Mammary epithelial cell (primary cell): ENCODE measurements at regions of chr10 and their contacts with region 1.

Region 1: DNA sequence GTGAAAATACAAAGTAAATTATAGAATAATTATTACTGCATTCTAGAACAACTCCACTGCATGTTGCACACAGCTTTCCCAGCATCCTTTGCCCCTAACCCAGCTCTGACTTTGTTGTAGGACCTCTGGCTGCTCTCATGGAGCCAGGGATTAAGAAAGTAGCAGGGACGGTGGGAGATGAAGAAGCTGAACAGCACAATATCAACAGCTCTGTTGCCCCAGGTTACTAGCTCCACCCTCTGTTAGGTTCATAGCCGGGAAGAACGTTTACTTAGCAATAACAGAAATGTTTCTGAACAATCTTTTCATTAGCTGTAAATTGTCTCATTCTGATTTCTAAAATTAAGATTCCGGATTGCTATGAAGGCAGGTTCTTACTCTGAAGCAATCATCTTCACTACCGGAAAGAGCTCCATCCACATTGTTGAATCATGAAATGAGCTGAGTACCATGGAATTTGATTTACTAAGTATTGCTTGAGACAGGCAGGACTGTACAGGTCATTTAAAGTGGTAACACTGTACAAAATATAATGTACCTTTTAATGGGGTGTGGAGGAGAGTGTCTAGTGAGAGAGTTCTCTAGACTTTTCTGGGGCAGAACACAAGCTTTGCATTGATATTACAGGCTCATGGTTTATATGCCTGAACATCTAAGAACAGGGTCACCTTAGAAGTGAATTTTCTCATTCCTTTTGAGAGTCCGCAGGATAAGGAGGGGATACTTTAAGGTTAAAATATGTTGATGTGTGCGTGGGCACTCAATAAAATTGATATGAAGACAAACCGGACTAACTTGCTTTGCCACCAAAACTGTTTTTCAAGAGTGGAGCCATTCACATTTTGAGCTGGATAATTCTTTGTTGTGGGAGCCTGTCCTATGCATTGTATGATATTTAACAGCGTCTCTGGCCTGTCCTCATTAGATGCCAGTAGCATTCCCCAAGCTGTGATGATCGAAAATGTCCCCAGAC is 20.8 kb upstream of the RAB18 start:
- DNase-seq: peak; percentile 91
- H3K4me3 ChIP-seq: peak overlapping the region; percentile 16 to 36 (median 36)
- H3K27ac ChIP-seq: peak overlapping the region; percentile 98
- H3K4me1 ChIP-seq: peaks cover 43% of the 10 kb centered on the region
- H3K27me3 ChIP-seq: no peaks in the 10 kb centered on the region
- CTCF ChIP-seq: no peak

Region 2: GRCh38 chr10:27147701-27148100 is 335.6 kb before region 1 on chr10:
- CTCF ChIA-PET with region 1: no interaction called
- dilution Hi-C with region 1: no loop called
- in situ Hi-C with region 1: no loop called
- intact Hi-C with region 1: no loop called
- DNase-seq: no peak
- H3K4me3 ChIP-seq: no peak overlapping the region
- H3K27ac ChIP-seq: no peak overlapping the region
- H3K4me1 ChIP-seq: peaks cover 5% of the 10 kb centered on the region
- H3K27me3 ChIP-seq: no peaks in the 10 kb centered on the region
- CTCF ChIP-seq: no peak

Region 3: GRCh38 chr10:27390681-27391080 is 92.6 kb before region 1 on chr10:
- CTCF ChIA-PET with region 1: no interaction called
- dilution Hi-C with region 1: no loop called
- in situ Hi-C with region 1: no loop called
- intact Hi-C with region 1: loop called (anchors 2 kb)
- DNase-seq: peak; percentile 90
- H3K4me3 ChIP-seq: no peak overlapping the region
- H3K27ac ChIP-seq: peak overlapping the region; percentile 4
- H3K4me1 ChIP-seq: peaks cover 29% of the 10 kb centered on the region
- H3K27me3 ChIP-seq: no peaks in the 10 kb centered on the region
- CTCF ChIP-seq: no peak

Region 4: GRCh38 chr10:28508304-28508925 is 1025.1 kb after region 1 on chr10:
- CTCF ChIA-PET with region 1: no interaction called
- dilution Hi-C with region 1: no loop called
- in situ Hi-C with region 1: no loop called
- intact Hi-C with region 1: no loop called
- DNase-seq: no peak
- H3K4me3 ChIP-seq: no peak overlapping the region
- H3K27ac ChIP-seq: no peak overlapping the region
- H3K4me1 ChIP-seq: no peaks in the 10 kb centered on the region
- H3K27me3 ChIP-seq: no peaks in the 10 kb centered on the region
- CTCF ChIP-seq: no peak